ENCODE measurements at regions of chr17 and their contacts with region 1.

Region 1: DNA sequence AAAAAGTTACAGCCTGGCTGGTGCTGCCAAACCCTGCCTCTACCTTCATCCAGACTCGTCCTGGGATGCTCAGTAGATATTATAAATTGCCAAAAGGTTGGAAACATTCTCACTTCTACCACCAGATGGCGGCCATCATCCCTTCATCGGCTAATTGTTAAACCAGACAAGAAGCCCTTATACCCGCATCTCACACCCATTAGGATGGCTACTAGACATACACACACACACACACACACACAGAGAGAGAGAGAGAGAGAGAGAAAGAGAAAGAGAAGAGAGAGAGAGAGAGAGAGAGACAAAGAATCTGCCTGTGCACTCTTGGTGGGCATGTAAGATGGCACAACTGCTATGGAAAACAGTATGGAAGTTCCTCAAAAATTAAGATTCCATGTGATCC is 15.0 kb upstream of the SCIMP start:
- DNase-seq: peak; percentile 89
- H3K4me3 ChIP-seq: no peak overlapping the region
- H3K27ac ChIP-seq: no peak overlapping the region
- H3K4me1 ChIP-seq: peaks cover 7% of the 10 kb centered on the region
- CTCF ChIP-seq: peak; percentile 82

Region 2: DNA sequence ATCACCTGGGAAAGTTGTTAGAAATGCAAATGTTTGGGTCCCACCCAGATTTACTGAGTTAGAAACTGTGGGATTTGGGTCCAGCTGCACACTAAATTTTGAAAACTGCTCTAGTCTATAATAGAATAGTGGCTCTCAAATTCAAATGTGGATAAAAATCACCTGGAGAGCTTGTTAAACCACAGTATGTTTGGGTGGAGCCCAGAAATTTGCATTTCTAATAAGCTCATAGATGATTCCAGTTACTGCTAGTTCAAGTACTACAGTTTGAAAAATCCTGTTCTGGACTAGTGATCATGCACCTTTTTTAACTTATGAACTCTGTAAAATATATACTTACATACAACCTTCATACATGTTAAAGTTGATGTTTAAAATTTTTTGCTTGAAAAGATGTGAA is 60.2 kb after region 1 on chr17:
- CTCF ChIA-PET with region 1: no interaction called
- POLR2A ChIA-PET with region 1: no interaction called
- intact Hi-C with region 1: loop called (anchors 2 kb)
- DNase-seq: no peak
- H3K4me3 ChIP-seq: no peak overlapping the region
- H3K27ac ChIP-seq: no peak overlapping the region
- H3K4me1 ChIP-seq: no peaks in the 10 kb centered on the region
- CTCF ChIP-seq: no peak

Region 3: DNA sequence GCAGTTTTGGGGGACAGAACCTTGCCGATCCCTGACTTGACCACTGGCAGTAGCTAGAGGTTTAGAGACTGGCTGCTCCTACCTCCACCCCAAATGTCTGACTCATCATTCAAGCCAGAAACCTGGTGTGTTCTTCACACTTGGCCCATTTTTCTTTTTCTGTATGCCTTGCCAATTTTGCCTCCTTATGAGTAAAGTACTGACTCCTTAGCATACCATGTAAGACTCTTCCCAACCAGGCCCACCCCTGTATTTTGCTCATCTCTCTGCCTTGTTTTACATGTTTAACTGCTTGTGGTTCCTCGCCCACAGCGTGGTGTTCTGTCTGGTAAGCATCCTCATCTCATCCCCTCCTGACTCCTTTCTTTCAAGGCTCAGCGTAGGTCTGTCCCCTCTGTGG is 131.9 kb after region 1 on chr17:
- CTCF ChIA-PET with region 1: no interaction called
- POLR2A ChIA-PET with region 1: no interaction called
- intact Hi-C with region 1: loop called (anchors 5 kb)
- DNase-seq: no peak
- H3K4me3 ChIP-seq: no peak overlapping the region
- H3K27ac ChIP-seq: no peak overlapping the region
- H3K4me1 ChIP-seq: no peaks in the 10 kb centered on the region
- CTCF ChIP-seq: no peak

Region 4: DNA sequence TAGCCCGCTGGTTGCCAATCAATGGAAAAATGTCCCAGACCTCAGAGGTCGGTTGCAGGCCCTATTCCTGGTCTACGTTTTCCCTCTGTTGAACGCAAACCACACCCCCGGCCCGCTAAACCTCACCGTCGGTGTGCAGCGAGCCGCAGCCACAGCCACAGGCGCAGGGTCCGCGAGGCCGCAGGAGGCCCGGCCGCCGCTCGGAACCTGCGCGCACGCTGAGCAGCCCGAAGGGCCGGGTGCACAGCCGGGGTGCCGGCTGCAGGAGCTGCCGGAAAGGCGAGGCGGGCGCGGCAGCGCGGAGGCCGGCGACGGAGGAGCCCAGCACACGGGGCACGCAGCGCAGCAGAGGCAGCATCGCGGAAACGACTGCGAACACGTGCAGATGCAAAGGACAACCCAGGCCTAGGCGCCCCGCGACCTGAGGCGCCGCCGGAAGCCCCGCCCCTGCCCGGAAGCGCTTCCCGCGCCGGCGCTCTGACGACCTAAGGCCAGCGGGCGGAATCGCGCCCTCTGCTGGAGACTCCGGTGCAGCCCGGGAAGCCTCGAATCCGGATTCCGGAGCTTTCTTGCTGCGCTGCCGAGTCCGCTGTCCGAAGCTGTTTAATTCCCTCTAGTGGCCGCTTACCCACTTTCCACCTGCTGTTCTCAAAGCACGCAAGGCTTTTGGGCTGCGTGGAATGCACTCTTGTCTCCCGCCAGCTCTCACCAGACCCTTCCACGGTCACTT is 189.3 kb after region 1 on chr17 and contains the start of gene C1QBP:
- CTCF ChIA-PET with region 1: no interaction called
- POLR2A ChIA-PET with region 1: interaction called, 3 read pairs
- intact Hi-C with region 1: loop called (anchors 1 kb)
- DNase-seq: peak; percentile 96
- H3K4me3 ChIP-seq: peak within 1 kb of the TSS; percentile 84
- H3K27ac ChIP-seq: peak within 1 kb of the TSS; percentile 58
- H3K4me1 ChIP-seq: peaks cover 27% of the 10 kb centered on the region
- CTCF ChIP-seq: peak; percentile 94
- total RNA-seq, gene C1QBP: 257 and 260 TPM in 2 replicates